Caco-2 (cell line): ENCODE measurements at regions of chr21 and their contacts with region 1.

Region 1: DNA sequence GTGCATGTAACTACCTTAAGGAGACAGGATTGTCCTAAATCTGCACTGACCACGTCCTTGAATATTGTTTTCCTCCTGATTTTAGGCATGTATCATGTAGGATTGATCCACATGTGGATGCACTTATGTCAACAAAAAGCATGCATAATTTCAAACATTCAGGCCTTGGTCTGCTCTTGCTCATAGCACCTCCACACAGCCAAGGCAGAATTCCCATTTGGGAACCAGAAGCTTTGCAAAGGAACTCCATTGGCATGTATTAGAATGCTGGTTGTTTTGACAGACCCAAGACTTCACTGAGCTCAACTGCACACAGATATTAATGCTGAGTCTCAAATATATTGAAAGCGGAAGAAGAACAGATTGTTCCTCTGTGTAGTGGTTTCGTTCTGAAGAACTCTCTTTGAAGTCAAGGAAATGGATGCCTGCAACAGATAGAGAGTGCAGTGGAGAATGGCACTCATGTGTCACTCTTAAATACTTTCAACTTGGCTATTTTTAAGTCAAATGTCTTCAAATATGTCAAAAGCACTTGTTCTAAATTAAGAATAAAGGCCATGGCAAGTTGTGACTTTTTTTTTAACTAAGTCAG is 387.6 kb downstream of the LTN1 start:
- DNase-seq: no peak
- H3K4me3 ChIP-seq: no peak overlapping the region
- H3K4me3 Mint-ChIP-seq: no peak overlapping the region
- H3K27ac Mint-ChIP-seq: no peak overlapping the region
- H3K4me1 ChIP-seq: no peaks in the 10 kb centered on the region
- H3K4me1 Mint-ChIP-seq: no peaks in the 10 kb centered on the region
- H3K27me3 ChIP-seq: no peaks in the 10 kb centered on the region
- H3K27me3 Mint-ChIP-seq: no peaks in the 10 kb centered on the region
- CTCF ChIP-seq: no peak

Region 2: DNA sequence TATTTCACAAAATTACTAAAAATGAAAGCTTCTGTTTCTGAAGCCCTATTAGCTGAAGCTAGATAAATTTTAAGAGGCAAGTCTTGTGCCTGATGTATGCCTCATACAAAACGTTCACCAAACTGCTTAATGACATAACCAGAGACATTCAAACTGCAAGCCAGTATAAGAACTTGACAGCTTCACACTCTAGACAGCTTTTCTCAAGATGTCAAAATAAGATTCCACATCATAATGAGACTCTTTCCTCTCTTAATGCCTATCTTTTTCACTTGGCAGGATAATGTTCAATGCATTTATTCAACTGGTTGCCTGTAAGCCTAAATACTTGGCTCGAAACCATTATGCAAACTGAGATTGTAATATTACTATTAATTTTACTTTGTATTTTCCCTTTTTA is 36.4 kb before region 1 on chr21:
- CTCF ChIA-PET with region 1: no interaction called
- POLR2A ChIA-PET with region 1: no interaction called
- intact Hi-C with region 1: no loop called
- DNase-seq: no peak
- H3K4me3 ChIP-seq: no peak overlapping the region
- H3K4me3 Mint-ChIP-seq: no peak overlapping the region
- H3K27ac Mint-ChIP-seq: no peak overlapping the region
- H3K4me1 ChIP-seq: no peaks in the 10 kb centered on the region
- H3K4me1 Mint-ChIP-seq: no peaks in the 10 kb centered on the region
- H3K27me3 ChIP-seq: no peaks in the 10 kb centered on the region
- H3K27me3 Mint-ChIP-seq: no peaks in the 10 kb centered on the region
- CTCF ChIP-seq: no peak

Region 3: GRCh38 chr21:28633839-28634555 is 29.0 kb after region 1 on chr21:
- CTCF ChIA-PET with region 1: interaction called, 11 read pairs
- POLR2A ChIA-PET with region 1: no interaction called
- intact Hi-C with region 1: no loop called
- DNase-seq: no peak
- H3K4me3 ChIP-seq: no peak overlapping the region
- H3K4me3 Mint-ChIP-seq: no peak overlapping the region
- H3K27ac Mint-ChIP-seq: no peak overlapping the region
- H3K4me1 ChIP-seq: no peaks in the 10 kb centered on the region
- H3K4me1 Mint-ChIP-seq: peaks cover 6% of the 10 kb centered on the region
- H3K27me3 ChIP-seq: no peaks in the 10 kb centered on the region
- H3K27me3 Mint-ChIP-seq: no peaks in the 10 kb centered on the region
- CTCF ChIP-seq: no peak